CD8-positive, alpha-beta memory T cell (primary cell): ENCODE measurements at regions of chr13 and their contacts with region 1.

Region 1: DNA sequence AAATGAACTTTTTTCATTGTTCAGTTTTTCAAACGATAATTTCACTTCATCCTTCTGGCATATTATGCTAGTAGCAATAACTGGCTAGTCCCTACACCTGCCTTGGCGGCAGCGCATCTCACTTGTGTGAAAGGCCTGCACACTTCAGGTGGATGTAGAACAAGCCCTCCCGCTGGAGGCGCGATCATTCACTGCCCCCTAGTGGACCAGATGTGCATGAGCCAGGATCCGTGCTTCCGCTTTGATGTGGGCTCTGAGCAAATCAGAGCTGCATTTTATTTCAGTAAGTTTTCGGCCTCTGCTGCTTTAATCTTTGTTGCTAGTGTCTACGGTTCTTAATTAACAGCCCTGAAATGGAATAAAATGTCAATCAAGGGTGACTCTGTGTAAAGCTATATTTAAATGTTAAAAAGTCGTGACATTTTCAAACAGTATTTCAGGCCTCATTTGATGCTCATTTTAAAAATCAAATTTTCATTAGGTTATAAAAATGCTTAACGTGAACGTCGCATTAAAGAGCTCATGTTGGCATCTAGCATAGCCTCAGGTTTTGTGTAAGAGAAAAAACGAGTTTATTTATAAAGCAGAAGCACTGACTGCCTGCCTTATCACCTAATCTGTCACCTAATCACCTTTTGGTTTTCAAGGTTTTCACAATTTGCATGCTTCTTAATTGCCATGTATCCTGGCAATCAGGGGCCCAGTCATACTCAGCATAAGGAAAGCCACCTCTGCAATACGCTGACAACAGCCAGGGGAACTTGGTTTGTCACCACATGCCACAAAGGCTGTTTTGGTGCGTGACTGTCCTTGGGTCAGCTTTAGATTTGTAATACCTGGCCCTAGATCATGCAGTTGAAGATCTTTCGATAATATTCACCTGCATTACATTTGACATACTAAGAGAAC is 112.2 kb downstream of the TEX26 start:
- DNase-seq: peak; percentile 62 to 85 (median 64)
- H3K4me3 ChIP-seq: no peak overlapping the region
- H3K4me3 Mint-ChIP-seq: peak overlapping the region in 4 of 7 donors; percentile 13 to 43 (median 25)
- H3K27ac ChIP-seq: no peak overlapping the region
- H3K27ac Mint-ChIP-seq: peak overlapping the region in 7 of 8 donors; percentile 10 to 85 (median 55)
- H3K4me1 ChIP-seq: peaks cover 34% of the 10 kb centered on the region
- H3K4me1 Mint-ChIP-seq: peaks cover 11 to 47% (median 25%) of the 10 kb centered on the region in 3 donors
- H3K27me3 ChIP-seq: no peaks in the 10 kb centered on the region
- H3K27me3 Mint-ChIP-seq: peaks cover 5 to 26% of the 10 kb centered on the region in 2 donors

Region 2: DNA sequence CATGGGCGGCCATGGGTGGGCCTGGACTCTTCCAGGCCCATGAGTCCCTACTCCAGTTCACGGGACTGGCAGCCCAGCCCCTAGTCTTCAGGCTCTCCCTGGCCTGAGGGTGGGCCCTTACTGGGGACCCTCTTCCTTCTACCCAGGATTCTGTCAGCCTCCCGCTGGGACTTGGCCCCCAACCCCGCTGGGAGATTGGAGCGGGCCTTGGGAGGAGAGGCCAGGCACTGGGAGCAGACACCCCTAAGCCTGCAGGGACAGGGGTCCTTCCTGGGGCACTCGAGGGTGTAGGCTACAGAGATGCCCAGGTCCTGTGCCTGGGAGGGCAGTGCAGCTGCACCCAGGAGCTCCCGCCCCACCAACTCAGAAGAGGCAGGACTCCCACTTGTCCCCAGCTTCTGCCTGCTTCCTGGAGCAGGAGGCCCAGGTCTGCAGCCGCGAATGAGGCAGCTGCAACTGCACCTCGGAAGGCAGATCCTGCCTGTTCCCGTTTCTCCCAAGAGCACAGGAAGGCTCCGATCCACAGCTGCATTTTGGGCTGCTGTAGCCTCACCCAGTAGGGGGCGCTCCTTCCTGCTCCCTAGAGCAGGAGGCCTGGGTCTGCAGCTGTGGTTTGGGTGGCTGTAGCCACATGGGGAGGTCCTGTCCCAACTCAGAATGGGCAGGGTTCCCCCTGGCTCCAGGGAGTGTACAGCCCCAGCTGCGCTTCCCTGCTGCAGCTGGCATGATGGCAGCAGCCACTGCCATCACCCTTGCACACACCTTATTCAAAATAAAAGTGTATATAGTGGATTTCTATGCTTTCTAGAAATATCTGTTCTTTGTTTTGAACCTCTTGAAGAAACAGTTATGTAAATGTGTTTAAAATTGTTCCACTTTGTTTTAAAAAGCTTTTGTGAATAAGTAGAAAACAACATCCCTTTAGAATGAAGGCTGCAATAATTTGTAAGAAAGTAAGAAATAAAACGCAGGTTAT is 65.4 kb before region 1 on chr13:
- CTCF ChIA-PET with region 1: interaction called, 12 read pairs
- POLR2A ChIA-PET with region 1: no interaction called
- DNase-seq: peak in 3 of 5 donors; percentile 2 to 16 (median 2)
- H3K4me3 ChIP-seq: no peak overlapping the region
- H3K4me3 Mint-ChIP-seq: no peak overlapping the region
- H3K27ac ChIP-seq: no peak overlapping the region
- H3K27ac Mint-ChIP-seq: no peak overlapping the region
- H3K4me1 ChIP-seq: no peaks in the 10 kb centered on the region
- H3K4me1 Mint-ChIP-seq: no peaks in the 10 kb centered on the region
- H3K27me3 ChIP-seq: no peaks in the 10 kb centered on the region
- H3K27me3 Mint-ChIP-seq: peaks cover 6 to 20% of the 10 kb centered on the region in 2 donors

Region 3: DNA sequence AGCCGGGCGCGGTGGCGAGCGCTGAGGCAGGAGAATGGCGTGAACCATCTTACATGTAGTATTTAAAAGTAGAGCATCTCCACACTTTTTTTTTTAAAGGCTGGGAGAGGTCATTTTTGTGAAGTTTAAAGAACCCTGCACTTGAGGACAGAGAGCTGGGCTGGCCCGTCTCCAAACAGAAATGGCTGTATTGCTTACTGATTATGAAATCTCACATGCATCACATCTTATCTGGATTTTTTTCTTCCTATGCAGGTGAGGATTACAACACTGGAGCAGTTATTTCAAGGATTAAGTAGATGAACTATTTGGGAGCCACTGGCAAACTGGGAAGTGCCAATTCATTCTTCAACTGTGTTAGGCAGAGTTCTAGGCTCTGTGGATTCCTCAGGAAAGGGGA is 52.7 kb before region 1 on chr13:
- CTCF ChIA-PET with region 1: no interaction called
- POLR2A ChIA-PET with region 1: no interaction called
- DNase-seq: no peak
- H3K4me3 ChIP-seq: no peak overlapping the region
- H3K4me3 Mint-ChIP-seq: no peak overlapping the region
- H3K27ac ChIP-seq: no peak overlapping the region
- H3K27ac Mint-ChIP-seq: no peak overlapping the region
- H3K4me1 ChIP-seq: no peaks in the 10 kb centered on the region
- H3K4me1 Mint-ChIP-seq: no peaks in the 10 kb centered on the region
- H3K27me3 ChIP-seq: no peaks in the 10 kb centered on the region
- H3K27me3 Mint-ChIP-seq: peaks cover 7 to 43% of the 10 kb centered on the region in 2 donors

Region 4: GRCh38 chr13:31022928-31023530 is 21.6 kb before region 1 on chr13:
- CTCF ChIA-PET with region 1: interaction called, 11 read pairs
- POLR2A ChIA-PET with region 1: no interaction called
- DNase-seq: no peak
- H3K4me3 ChIP-seq: no peak overlapping the region
- H3K4me3 Mint-ChIP-seq: no peak overlapping the region
- H3K27ac ChIP-seq: no peak overlapping the region
- H3K27ac Mint-ChIP-seq: no peak overlapping the region
- H3K4me1 ChIP-seq: no peaks in the 10 kb centered on the region
- H3K4me1 Mint-ChIP-seq: no peaks in the 10 kb centered on the region
- H3K27me3 ChIP-seq: no peaks in the 10 kb centered on the region
- H3K27me3 Mint-ChIP-seq: peaks cover 5 to 29% of the 10 kb centered on the region in 2 donors

Region 5: DNA sequence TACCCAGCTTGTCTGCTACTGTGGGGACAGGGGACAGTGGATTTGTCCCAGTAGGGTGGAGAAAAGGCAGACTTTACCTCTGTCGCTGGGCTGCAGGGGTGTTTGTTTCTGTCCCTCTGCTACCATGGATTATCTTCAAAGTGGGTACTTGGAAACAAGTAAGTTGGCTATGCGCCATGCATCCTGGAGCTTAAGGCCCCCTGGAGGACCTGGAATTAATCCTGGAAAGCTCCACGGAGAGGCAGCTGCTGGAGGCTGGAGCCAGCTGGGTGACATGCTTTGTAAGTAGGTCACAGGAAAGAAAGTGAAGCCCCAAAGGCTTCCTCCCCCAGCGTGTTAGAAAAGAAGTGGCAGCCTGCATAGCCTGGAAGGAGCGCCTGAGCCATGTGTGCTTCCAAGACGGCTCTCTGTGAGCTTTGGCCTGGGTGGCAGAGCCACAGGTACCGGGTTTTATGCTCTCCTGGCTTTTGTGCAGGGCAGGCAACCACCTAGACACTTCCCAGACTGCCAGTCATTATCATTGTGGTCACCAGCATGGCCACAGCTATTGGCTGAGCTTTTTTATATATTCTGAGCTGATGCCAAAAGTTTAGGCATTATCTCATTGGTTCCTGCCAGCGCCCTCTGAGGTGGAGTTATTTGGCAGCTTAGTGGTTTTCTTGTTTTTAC is 164.7 kb after region 1 on chr13:
- CTCF ChIA-PET with region 1: no interaction called
- POLR2A ChIA-PET with region 1: no interaction called
- DNase-seq: peak in 2 of 5 donors; percentile 9 to 25
- H3K4me3 ChIP-seq: no peak overlapping the region
- H3K4me3 Mint-ChIP-seq: peak overlapping the region in 6 of 7 donors; percentile 56 to 83 (median 66)
- H3K27ac ChIP-seq: no peak overlapping the region
- H3K27ac Mint-ChIP-seq: peak overlapping the region in 7 of 8 donors; percentile 61 to 88 (median 78)
- H3K4me1 ChIP-seq: no peaks in the 10 kb centered on the region
- H3K4me1 Mint-ChIP-seq: peaks cover 20 to 29% (median 27%) of the 10 kb centered on the region in 3 donors
- H3K27me3 ChIP-seq: no peaks in the 10 kb centered on the region
- H3K27me3 Mint-ChIP-seq: no peaks in the 10 kb centered on the region